GM10248 (cell line): ENCODE measurements at regions of chr1 and their contacts with region 1.

Region 1: DNA sequence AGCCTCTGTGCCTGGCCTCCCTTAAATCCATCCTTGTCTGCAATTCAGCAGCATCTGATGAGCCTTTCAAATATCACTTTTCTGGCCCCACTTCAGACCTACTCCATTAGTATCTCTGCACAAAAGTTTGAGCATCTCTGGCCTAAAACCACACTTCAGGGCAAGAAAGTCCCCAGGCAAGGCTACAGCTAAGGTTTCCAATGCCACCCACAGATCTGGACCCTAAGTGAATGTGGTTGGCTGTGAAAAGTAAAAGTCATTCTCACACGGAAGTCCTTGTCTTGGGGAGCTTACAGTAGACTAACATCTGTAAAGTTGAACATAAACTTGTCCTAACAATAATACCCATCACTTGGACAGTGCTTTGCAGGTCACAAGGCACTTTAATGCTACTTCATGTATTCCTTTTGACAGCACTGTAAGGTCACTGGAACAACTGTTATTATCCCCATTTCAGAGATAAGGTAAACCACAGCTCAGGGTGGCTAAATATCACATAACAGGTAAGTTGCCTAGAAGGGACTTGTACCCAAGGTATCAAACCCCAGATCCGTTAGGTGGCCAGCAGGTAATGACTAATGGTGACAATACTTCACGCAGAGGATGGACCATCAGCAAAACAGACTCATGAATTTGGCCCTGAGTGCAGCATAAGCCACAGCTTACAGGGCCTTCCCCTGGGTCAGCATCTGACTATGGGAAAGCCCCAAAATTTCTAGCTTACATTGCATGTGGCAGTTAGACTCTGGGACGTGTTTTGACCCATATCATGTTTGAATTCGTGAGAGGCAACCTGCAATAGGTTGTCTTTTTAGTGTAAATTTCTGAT is 356.0 kb downstream of the HHAT start:
- DNase-seq: peak; percentile 71
- CTCF ChIP-seq: no peak

Region 2: DNA sequence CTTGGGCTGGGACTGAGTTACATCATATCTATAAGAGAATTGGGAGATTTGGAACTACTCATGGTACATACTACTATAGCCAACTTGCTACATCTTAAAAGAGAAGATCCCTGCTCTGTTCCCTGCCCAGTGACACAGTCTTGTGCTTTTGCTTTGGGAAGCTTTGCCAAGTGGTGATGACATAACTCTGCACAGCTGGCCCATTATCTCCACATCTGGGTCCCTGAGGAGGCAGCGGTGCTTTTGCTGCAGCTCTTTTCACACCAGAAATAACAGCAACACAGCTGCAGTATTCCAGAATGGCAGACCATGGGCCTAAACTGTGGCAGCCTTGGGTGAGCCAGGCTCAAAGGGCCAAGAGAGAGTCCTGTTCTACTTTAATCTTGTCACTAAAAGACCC is 60.0 kb before region 1 on chr1:
- CTCF ChIA-PET with region 1: no interaction called
- POLR2A ChIA-PET with region 1: no interaction called
- DNase-seq: no peak
- CTCF ChIP-seq: no peak

Region 3: DNA sequence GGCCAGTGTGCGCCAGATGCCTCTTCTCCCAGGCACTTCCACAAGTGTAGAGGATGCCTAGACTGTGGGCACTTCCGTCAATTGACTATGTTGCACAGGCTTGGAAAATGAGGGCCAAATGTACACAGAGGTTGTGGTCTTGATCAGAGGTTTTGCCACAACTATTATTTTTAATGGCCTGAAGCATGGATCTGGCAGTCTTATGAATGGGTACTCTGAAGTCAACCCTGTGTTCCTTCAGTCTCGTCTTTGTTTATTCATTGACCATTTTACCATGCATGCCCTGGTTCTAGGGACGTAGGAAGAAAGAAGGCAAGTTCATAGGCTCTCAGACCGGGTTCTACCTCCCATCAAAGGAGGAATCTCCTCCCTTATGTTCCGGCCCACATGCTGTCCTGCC is 26.9 kb before region 1 on chr1:
- CTCF ChIA-PET with region 1: no interaction called
- POLR2A ChIA-PET with region 1: no interaction called
- DNase-seq: no peak
- CTCF ChIP-seq: no peak

Region 4: GRCh38 chr1:210696709-210697108 is 12.0 kb after region 1 on chr1:
- CTCF ChIA-PET with region 1: interaction called, 11 read pairs
- POLR2A ChIA-PET with region 1: no interaction called
- DNase-seq: peak; percentile 59
- CTCF ChIP-seq: no peak